ENCODE measurements at regions of chr2 and their contacts with region 1.

Region 1: DNA sequence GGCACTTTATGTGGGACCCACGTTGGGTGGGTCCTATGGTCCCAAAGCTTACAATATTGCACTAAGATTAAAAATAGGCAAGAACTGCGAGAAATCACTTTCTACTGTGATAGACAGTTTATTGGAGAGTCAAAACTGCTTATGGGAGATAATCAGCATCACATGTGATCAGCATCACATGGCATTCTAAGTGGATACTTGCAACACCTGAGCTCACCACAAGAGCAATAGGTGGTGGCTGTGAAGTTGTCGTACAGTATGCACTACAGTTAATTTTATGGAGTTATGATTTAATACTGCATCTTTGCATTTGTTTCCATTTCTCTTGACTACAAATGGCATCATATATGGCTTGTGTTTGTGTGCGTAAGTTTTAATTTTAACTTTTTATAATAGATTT is 11.6 kb downstream of the PNO1 start:
- DNase-seq: no peak
- CTCF ChIP-seq: no peak

Region 2: DNA sequence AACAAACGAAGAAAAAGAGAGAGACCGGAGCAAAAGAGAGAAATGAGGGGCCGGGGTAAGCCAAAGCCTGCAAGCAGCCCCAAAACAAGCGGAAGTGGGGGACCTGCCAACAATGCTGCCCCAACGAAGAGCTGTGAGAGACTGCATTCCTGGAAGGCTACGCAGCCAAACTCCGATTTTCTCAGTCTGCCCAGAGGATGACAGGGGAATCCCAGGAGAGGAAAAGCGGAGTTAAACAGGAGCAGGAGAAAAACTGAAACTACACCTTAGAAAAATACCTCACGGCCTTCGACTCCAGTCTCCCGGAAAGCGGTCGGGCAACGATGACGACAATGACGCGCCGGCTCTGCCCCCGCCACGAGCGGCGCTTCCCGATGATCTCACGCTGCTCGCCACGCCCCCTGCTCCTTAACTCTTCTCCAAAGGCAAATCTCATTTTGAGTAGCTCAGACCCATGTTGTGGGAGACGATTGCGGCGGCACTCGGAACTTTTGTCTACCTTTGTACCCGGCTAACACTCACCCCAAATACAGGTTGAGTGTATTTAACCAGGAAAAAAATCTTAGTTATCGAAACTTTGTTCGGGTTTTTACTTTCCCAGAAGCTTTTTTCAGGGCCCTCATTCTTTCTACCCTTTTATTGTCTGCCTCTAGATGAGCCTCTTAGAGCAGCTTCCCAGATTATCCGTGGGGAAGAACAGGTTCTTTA is 106.5 kb before region 1 on chr2 and contains the start of gene C1D:
- CTCF ChIA-PET with region 1: no interaction called
- POLR2A ChIA-PET with region 1: no interaction called
- DNase-seq: peak; percentile 88
- CTCF ChIP-seq: no peak

Region 3: DNA sequence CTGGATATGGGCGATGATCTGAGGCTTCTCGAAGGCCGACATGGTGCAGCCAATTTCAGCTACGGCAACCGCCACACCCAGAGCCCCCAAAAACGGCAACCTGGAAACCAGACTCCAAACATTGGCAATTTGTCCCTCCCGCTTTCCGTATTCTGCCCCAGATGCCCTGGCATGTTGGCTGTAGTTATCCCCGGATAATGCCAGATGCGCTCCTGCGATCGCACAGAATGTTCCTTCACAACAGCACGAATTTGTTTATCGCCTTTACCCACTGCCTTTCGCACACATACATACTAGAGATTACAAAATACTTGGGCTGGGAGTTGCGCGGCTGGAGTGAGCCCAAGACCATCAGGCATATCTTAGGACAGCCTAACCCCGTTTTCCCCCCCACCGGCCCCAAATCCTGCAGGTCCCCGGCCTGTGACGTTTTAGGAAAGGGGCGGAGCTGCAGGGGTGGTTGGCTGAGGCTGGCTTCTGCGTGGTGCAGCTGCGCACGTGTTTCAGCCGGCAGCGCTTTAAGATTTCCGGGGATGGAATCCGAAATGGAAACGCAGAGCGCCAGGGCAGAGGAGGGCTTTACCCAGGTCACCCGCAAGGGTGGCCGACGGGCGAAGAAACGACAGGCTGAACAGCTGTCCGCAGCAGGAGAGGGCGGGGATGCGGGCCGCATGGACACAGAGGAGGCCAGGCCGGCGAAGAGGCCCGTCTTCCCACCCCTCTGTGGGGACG is 11.7 kb before region 1 on chr2 and contains the start of gene PNO1:
- CTCF ChIA-PET with region 1: interaction called, 13 read pairs
- POLR2A ChIA-PET with region 1: interaction called, 6 read pairs
- DNase-seq: peak; percentile 97
- CTCF ChIP-seq: no peak

Region 4: GRCh38 chr2:68185541-68186164 is 16.4 kb after region 1 on chr2:
- CTCF ChIA-PET with region 1: interaction called, 27 read pairs
- POLR2A ChIA-PET with region 1: no interaction called
- DNase-seq: peak; percentile 31
- CTCF ChIP-seq: peak; percentile 54